ENCODE measurements at regions of chr10 and their contacts with region 1.

Region 1: DNA sequence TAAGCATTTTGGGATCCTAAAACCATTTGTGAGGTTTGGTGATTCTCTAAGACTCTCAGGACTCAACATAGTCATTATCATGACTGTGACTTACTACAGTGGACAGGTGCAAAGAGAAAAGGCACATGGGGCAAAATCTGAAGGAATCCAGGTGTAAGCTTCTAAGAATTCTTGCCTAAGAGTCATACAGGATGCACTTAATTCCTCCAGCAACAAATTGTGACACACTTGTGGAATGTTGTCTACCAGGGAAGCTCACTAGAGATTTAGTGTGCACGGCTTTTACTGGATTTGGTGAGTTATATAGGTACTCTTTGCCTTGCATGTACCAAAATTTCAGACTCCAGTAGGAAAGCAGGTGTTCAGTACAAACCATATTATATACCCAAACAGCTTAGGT is 47.9 kb downstream of the WAC start:
- DNase-seq: no peak
- ATAC-seq: no peak
- H3K4me3 ChIP-seq: no peak overlapping the region
- H3K4me3 Mint-ChIP-seq: peak overlapping the region in 3 of 10 donors; percentile 1 to 32 (median 13)
- H3K27ac ChIP-seq: no peak overlapping the region
- H3K27ac Mint-ChIP-seq: peak overlapping the region in 4 of 9 donors; percentile 17 to 74 (median 48)
- H3K4me1 ChIP-seq: peaks cover 15 to 23% of the 10 kb centered on the region in 2 donors
- H3K4me1 Mint-ChIP-seq: peaks cover 44 to 81% (median 79%) of the 10 kb centered on the region in 7 donors
- H3K27me3 ChIP-seq: no peaks in the 10 kb centered on the region
- H3K27me3 Mint-ChIP-seq: no peaks in the 10 kb centered on the region

Region 2: DNA sequence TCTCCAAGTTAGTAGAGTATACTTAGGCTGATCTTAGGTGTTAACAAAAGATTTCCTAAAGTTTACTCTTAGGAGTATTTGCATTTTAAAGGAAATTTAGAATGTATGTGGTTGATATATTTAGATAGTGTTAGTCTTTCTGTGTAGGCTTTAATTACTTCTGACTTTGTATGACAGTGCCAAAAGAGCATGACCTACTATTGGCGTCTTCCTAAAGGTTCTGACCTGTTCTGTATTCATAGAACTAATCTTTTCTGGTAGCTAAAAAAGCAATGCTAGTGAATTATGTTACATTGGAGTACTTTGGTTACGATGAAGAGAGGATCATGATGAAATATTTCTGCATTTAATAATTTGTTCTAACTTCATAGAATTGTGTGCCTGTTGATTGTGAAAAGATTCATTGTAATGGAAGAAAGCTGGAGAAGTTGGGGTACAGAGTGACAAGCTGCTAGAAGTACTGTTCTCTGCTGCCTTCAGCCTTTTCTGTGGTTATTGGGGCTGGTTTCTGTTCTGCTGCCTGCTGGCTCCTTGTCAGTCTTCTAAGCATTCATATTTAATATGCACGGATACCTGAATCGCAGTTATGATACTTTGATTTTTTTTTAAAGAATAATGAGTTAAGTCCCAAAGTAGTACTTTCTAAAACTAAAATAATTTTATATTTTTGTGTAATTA is 34.7 kb before region 1 on chr10:
- CTCF ChIA-PET with region 1: interaction called, 4 read pairs
- POLR2A ChIA-PET with region 1: interaction called, 3 read pairs
- intact Hi-C with region 1: loop called in 1 of 2 experiments (anchors 5 kb)
- DNase-seq: peak in 1 of 9 donors; percentile 15
- ATAC-seq: peak; percentile 51
- H3K4me3 ChIP-seq: no peak overlapping the region
- H3K4me3 Mint-ChIP-seq: peak overlapping the region in 8 of 10 donors; percentile 15 to 64 (median 40)
- H3K27ac ChIP-seq: no peak overlapping the region
- H3K27ac Mint-ChIP-seq: peak overlapping the region in 7 of 9 donors; percentile 2 to 40 (median 16)
- H3K4me1 ChIP-seq: peaks cover 46 to 61% of the 10 kb centered on the region in 2 donors
- H3K4me1 Mint-ChIP-seq: peaks cover 62 to 87% (median 79%) of the 10 kb centered on the region in 7 donors
- H3K27me3 ChIP-seq: no peaks in the 10 kb centered on the region
- H3K27me3 Mint-ChIP-seq: no peaks in the 10 kb centered on the region

Region 3: DNA sequence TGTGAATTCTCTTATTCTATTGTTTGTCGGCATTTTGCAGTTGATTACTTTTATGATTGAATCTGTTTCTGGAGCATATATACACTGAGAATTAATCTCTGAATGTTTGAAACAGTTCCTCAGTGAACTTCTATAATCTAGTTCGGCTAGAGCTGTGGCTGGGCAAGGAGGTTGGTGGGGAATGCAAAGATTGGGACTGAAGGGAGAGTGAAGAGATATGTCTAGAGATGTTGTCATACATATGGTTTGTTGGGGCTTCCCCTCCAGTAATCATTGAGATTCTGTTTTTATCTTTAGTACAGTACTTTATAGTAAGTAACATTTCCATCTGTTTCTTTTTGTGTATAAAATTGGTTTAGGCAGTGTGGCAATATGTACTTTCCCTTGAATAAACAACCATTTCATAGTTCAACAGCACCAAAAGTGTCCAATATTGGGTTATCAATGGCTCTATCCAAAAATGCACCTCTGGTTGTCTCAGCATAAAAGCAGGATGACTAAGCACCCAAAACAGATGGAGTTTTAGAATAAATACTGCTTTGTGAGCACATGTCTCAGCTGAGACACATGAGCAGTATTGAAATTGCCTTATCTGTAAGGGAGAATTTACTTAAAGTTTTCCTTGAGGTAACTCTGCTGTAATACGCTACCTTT is 11.2 kb before region 1 on chr10:
- CTCF ChIA-PET with region 1: no interaction called
- POLR2A ChIA-PET with region 1: no interaction called
- intact Hi-C with region 1: loop called in 1 of 2 experiments (anchors 1 kb)
- DNase-seq: no peak
- ATAC-seq: no peak
- H3K4me3 ChIP-seq: no peak overlapping the region
- H3K4me3 Mint-ChIP-seq: peak overlapping the region in 6 of 10 donors; percentile 3 to 56 (median 21)
- H3K27ac ChIP-seq: no peak overlapping the region
- H3K27ac Mint-ChIP-seq: peak overlapping the region in 5 of 9 donors; percentile 2 to 33 (median 6)
- H3K4me1 ChIP-seq: peaks cover 14 to 28% of the 10 kb centered on the region in 2 donors
- H3K4me1 Mint-ChIP-seq: peaks cover 54 to 99% (median 91%) of the 10 kb centered on the region in 7 donors
- H3K27me3 ChIP-seq: no peaks in the 10 kb centered on the region
- H3K27me3 Mint-ChIP-seq: no peaks in the 10 kb centered on the region

Measured in naive thymus-derived CD4-positive, alpha-beta T cell (primary cell).